ENCODE measurements at regions of chr20 and their contacts with region 1.

Region 1: GRCh38 chr20:38043512-38044300 is 10.2 kb downstream of the RPRD1B start:
- DNase-seq: peak in 2 of 3 donors; percentile 8 to 21
- H3K4me3 ChIP-seq: no peak overlapping the region
- H3K27ac ChIP-seq: no peak overlapping the region
- H3K4me1 ChIP-seq: no peaks in the 10 kb centered on the region
- H3K27me3 ChIP-seq: no peaks in the 10 kb centered on the region

Region 2: GRCh38 chr20:37758332-37758731 is 285.4 kb before region 1 on chr20:
- CTCF ChIA-PET with region 1: no interaction called
- POLR2A ChIA-PET with region 1: no interaction called
- DNase-seq: no peak
- H3K4me3 ChIP-seq: no peak overlapping the region
- H3K27ac ChIP-seq: no peak overlapping the region
- H3K4me1 ChIP-seq: no peaks in the 10 kb centered on the region
- H3K27me3 ChIP-seq: no peaks in the 10 kb centered on the region

Region 3: DNA sequence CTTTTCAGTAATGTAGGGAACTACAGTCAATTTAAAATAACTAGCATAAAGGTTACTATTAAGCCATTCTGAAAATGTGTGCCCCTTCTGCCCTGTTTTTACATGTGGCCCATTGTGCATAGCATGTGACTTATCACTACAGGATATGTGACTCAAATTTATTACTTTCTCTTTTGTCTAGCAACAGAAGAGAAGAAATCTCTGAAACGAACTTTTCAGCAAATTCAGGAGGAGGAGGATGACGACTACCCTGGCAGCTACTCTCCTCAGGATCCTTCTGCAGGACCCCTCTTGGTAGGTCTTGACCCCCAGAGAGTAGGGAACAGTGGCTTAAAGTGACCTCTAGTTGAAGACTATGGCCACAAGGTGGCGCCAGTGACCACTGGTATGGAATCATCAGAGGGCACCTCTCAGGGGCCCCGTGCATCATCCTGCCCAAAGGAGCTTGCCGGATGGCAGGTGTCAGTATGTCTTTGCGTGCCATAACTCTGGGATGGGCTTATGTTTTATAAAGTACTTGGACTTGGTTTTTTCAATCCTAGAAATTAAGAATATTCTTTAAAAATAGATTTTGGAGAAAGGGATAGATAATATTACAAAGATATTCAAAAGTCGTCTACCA is 13.8 kb after region 1 on chr20:
- CTCF ChIA-PET with region 1: interaction called, 30 read pairs
- POLR2A ChIA-PET with region 1: no interaction called
- DNase-seq: peak; percentile 65 to 73 (median 70)
- H3K4me3 ChIP-seq: no peak overlapping the region
- H3K27ac ChIP-seq: no peak overlapping the region
- H3K4me1 ChIP-seq: peaks cover 0 to 2% (median 0%) of the 10 kb centered on the region in 4 experiments
- H3K27me3 ChIP-seq: no peaks in the 10 kb centered on the region